ENCODE measurements at regions of chr1 and their contacts with region 1.

Region 1: GRCh38 chr1:15028102-15028501 is 125.4 kb upstream of the TMEM51 start:
- DNase-seq: peak; percentile 47
- H3K4me3 ChIP-seq: no peak overlapping the region
- CTCF ChIP-seq: no peak

Region 2: DNA sequence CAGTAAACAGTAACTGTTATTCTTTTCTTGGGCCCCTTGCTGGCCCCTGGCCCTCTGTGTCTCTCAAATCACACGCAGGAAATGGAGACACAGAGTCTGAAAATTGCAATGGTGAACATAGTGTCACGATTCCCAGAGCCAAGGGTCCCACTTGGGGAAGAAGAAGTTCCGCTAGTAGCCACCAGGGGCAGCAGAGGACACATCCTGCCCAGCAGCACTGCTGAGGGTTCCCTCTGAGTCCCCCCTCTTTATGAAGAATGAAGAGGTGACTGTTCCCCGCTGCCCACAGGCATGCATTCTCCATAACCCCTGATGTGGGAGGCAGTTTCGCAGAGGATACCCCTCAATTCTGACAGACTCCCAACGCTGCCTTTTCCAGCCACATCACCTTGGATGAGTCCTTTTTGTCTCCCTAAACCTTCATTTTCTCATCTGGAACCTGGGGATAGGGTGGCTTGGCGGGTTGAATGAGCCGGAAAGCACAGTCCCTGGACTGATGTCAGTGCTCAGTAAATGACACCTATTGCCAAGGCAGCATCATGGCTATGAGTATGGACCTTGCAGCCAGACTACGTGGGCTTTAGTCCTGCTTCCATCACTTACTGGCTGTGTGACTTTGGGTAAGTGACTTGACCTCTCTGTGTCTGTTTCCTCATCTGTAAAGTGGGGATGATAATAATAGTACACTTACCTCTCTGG is 112.6 kb before region 1 on chr1:
- CTCF ChIA-PET with region 1: interaction called, 32 read pairs
- POLR2A ChIA-PET with region 1: no interaction called
- DNase-seq: no peak
- H3K4me3 ChIP-seq: no peak overlapping the region
- CTCF ChIP-seq: peak; percentile 90

Region 3: GRCh38 chr1:14929547-14930246 is 98.4 kb before region 1 on chr1:
- CTCF ChIA-PET with region 1: interaction called, 29 read pairs
- POLR2A ChIA-PET with region 1: no interaction called
- DNase-seq: no peak
- H3K4me3 ChIP-seq: no peak overlapping the region
- CTCF ChIP-seq: no peak

Region 4: GRCh38 chr1:14945132-14946016 is 82.7 kb before region 1 on chr1:
- CTCF ChIA-PET with region 1: interaction called, 19 read pairs
- POLR2A ChIA-PET with region 1: interaction called, 10 read pairs
- DNase-seq: peak; percentile 75
- H3K4me3 ChIP-seq: peak overlapping the region; percentile 60
- CTCF ChIP-seq: no peak

Region 5: GRCh38 chr1:14987829-14988603 is 40.1 kb before region 1 on chr1:
- CTCF ChIA-PET with region 1: interaction called, 11 read pairs
- POLR2A ChIA-PET with region 1: no interaction called
- DNase-seq: no peak
- H3K4me3 ChIP-seq: no peak overlapping the region
- CTCF ChIP-seq: no peak

Region 6: DNA sequence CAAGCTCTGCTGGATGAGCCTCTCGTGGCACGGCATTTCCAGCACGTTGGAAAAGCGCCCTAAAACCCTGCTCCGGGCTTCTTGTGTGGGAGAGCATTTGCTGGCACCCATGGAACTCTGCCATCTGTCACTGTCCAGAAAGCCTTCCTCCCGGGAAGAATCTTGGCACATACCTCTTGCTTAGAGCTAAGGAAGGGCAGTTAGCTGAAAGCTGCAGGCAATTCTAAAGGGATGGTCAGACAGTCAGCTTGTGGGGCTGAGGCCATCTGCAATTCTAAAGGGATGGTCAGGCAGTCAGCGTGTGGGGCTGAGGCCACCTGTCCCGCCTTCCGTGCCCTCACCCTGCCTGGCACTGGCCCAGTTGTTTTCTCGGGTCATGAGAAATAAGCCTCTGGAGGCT is 13.6 kb before region 1 on chr1:
- CTCF ChIA-PET with region 1: interaction called, 41 read pairs
- POLR2A ChIA-PET with region 1: no interaction called
- DNase-seq: no peak
- H3K4me3 ChIP-seq: no peak overlapping the region
- CTCF ChIP-seq: no peak

Region 7: DNA sequence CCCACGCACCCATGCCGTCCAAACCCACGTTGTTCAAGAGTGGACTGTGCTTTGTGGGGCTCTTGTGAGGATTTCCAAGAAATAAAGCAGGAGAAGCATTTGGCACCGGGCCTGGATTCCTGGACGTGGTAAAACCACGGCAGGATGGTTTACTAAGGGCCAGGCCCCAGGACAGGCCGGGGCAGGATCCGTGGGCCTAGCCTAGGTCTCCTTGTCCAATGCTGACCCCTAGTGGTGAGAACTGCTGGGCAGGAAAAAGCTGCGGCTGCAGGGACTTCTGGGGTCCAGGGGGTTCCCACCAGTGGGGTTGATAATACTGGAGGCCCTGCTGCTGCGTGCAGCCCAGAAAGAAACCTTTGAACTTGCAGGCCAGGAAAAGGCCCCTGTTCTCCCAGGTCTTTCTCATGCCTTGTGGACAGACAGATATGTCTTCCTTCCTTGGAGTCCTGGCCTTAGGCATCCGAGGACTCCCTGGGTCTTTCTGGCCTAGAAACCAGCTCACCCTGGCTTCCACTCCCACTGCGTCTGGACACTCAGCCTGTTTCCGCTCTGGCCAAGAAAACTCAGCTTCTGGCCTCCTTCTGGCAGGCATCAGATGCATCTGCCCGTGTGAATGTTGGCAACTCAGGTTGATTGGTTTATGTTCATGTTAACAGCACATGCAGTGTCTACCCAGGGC is 18.5 kb after region 1 on chr1:
- CTCF ChIA-PET with region 1: interaction called, 23 read pairs
- POLR2A ChIA-PET with region 1: no interaction called
- DNase-seq: peak; percentile 38
- H3K4me3 ChIP-seq: no peak overlapping the region
- CTCF ChIP-seq: peak; percentile 88

Measured in AG04449 (cell line).